ENCODE measurements at regions of chr12 and their contacts with region 1.

Region 1: DNA sequence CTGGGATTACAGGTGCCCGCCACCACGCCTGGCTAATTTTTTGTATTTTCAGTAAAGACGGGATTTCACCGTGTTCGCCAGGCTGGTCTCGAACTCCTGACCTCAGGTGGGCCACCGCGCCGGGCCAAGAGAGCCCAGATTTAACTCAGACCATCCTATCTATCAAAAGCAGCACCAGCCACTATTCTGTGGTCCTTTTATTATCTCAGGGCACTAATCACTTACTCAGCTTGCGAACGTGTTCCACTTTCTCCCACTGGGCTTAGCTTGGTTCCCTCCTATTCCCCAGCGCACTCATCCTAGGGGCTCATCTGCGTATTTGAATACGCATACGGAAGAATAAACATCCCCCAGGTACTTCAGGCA is 16.2 kb upstream of the AACS start:
- DNase-seq: no peak
- ATAC-seq: no peak
- H3K4me3 ChIP-seq: peak overlapping the region; percentile 94
- H3K4me3 Mint-ChIP-seq: peak overlapping the region; percentile 78 to 97 (median 92)
- H3K27ac ChIP-seq: peak overlapping the region; percentile 71
- H3K27ac Mint-ChIP-seq: peak overlapping the region; percentile 42 to 95 (median 92)
- H3K4me1 ChIP-seq: peaks cover 0 to 5% of the 10 kb centered on the region in 2 donors
- H3K4me1 Mint-ChIP-seq: peaks cover 0 to 11% (median 7%) of the 10 kb centered on the region in 7 donors
- H3K27me3 ChIP-seq: no peaks in the 10 kb centered on the region
- H3K27me3 Mint-ChIP-seq: no peaks in the 10 kb centered on the region

Region 2: DNA sequence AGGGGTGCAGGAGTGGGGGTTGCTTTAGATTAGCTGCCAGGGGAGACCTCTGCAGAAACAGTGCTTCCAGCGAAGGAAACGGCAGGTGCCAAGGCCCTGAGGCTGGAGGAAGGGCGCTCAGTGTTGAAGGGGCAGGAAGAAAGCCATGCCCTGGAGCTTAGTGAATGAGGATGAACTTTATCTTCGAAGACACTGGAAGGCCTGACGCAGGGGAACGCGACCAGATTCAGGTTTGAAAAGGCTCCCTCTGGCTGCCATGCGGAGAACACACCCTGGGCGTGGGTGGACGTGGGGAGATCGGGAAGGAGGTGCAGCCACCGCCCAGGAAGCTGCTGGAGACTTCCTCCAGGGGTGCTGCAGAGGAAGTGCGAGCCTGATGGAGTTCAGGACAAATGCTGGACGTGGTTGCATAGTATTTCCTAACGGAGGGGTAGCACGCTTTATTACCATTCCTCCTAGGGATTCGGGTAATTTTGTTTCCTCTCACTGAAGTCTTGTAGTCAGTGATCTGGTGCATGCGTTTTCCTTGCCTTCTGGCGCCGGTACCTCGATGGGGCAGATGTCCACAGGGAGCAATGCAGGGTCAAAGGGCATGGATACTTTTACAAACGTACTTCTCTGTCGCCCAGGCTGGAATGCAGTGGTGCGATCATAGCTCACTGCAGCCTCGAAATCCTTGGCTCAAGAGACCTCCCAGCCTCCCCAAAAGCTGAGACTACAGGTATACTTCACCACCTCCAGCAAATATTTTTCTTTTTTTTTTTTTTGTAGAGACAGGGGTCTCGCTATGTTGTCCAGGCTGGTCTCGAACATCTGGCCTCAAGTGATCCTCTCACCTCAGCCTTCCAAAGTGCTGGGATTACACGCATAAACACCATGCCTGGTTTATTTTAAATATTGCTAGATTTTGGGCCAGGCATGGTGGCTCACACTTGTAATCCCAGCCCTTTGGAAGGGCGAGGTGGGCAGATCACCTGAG is 108.2 kb before region 1 on chr12:
- CTCF ChIA-PET with region 1: no interaction called
- POLR2A ChIA-PET with region 1: interaction called, 10 read pairs
- intact Hi-C with region 1: loop called (anchors 1 kb)
- DNase-seq: peak; percentile 48 to 85 (median 78)
- ATAC-seq: peak; percentile 74
- H3K4me3 ChIP-seq: peak overlapping the region; percentile 97
- H3K4me3 Mint-ChIP-seq: no peak overlapping the region
- H3K27ac ChIP-seq: peak overlapping the region; percentile 66
- H3K27ac Mint-ChIP-seq: no peak overlapping the region
- H3K4me1 ChIP-seq: peaks cover 19 to 26% of the 10 kb centered on the region in 2 donors
- H3K4me1 Mint-ChIP-seq: peaks cover 0 to 22% (median 0%) of the 10 kb centered on the region in 7 donors
- H3K27me3 ChIP-seq: no peaks in the 10 kb centered on the region
- H3K27me3 Mint-ChIP-seq: no peaks in the 10 kb centered on the region

Region 3: GRCh38 chr12:125065021-125065795 is 16.1 kb after region 1 on chr12 and contains the start of gene AACS:
- CTCF ChIA-PET with region 1: no interaction called
- POLR2A ChIA-PET with region 1: interaction called, 17 read pairs
- intact Hi-C with region 1: loop called (anchors 1 kb)
- DNase-seq: peak; percentile 50 to 81 (median 69)
- ATAC-seq: peak; percentile 99
- H3K4me3 ChIP-seq: peak within 1 kb of the TSS; percentile 69
- H3K4me3 Mint-ChIP-seq: peak within 1 kb of the TSS; percentile 72 to 92 (median 86)
- H3K27ac ChIP-seq: peak within 1 kb of the TSS; percentile 83
- H3K27ac Mint-ChIP-seq: peak within 1 kb of the TSS; percentile 42 to 88 (median 64)
- H3K4me1 ChIP-seq: no peaks in the 10 kb centered on the region
- H3K4me1 Mint-ChIP-seq: peaks cover 9 to 25% (median 20%) of the 10 kb centered on the region in 7 donors
- H3K27me3 ChIP-seq: no peaks in the 10 kb centered on the region
- H3K27me3 Mint-ChIP-seq: peaks cover 0 to 21% (median 3%) of the 10 kb centered on the region in 5 donors
- total RNA-seq, gene AACS: 11.6 to 21.7 (median 14.8) TPM

Region 4: GRCh38 chr12:125079648-125080645 is 30.9 kb after region 1 on chr12:
- CTCF ChIA-PET with region 1: no interaction called
- POLR2A ChIA-PET with region 1: no interaction called
- intact Hi-C with region 1: no loop called
- DNase-seq: no peak
- ATAC-seq: no peak
- H3K4me3 ChIP-seq: no peak overlapping the region
- H3K4me3 Mint-ChIP-seq: no peak overlapping the region
- H3K27ac ChIP-seq: no peak overlapping the region
- H3K27ac Mint-ChIP-seq: no peak overlapping the region
- H3K4me1 ChIP-seq: no peaks in the 10 kb centered on the region
- H3K4me1 Mint-ChIP-seq: peaks cover 0 to 7% (median 0%) of the 10 kb centered on the region in 7 donors
- H3K27me3 ChIP-seq: no peaks in the 10 kb centered on the region
- H3K27me3 Mint-ChIP-seq: no peaks in the 10 kb centered on the region

Region 5: DNA sequence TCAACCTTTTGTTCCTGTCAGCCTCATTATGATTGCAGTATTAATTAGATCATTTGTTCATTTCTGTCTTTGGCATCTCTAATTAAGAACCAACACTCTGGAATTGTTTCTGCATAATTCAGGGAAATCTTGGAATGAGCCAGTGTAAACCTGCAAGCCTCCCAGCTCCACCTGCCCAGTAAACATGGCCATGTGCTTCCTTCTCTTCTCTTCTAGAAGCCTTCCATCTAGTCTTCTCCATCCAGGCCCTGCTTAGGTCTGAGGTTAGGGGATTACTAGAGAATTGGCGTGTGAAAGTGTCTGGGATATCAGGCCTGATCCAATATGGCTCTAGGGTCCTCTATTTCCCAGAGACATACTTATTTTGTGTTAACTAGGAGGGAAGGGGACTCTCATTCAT is 544.2 kb after region 1 on chr12:
- CTCF ChIA-PET with region 1: no interaction called
- POLR2A ChIA-PET with region 1: no interaction called
- intact Hi-C with region 1: no loop called
- DNase-seq: no peak
- ATAC-seq: no peak
- H3K4me3 ChIP-seq: no peak overlapping the region
- H3K4me3 Mint-ChIP-seq: no peak overlapping the region
- H3K27ac ChIP-seq: no peak overlapping the region
- H3K27ac Mint-ChIP-seq: no peak overlapping the region
- H3K4me1 ChIP-seq: no peaks in the 10 kb centered on the region
- H3K4me1 Mint-ChIP-seq: no peaks in the 10 kb centered on the region
- H3K27me3 ChIP-seq: no peaks in the 10 kb centered on the region
- H3K27me3 Mint-ChIP-seq: peaks cover 0 to 5% (median 0%) of the 10 kb centered on the region in 5 donors

Measured in naive thymus-derived CD4-positive, alpha-beta T cell (primary cell).